Tibial artery (tissue), 4 donors: ENCODE measurements at regions of chr16 and their contacts with region 1.

Region 1: DNA sequence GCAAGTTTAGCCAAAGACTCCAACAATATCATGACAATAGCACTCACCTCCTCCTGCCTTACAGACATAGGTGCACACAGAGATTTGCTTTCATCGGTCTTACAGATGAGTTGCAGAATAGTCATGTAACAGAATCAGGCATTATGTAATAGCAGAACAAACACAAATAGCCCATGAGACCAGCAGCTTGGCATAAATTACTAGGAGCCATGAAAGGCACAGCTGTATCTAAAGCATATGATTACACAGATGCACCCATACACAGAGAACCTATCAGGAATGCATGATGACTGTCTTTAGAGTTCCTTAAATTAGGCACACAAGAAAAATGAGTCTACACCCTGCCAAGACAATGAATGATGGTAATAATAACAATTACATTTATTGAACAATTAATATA is 342.0 kb upstream of the XYLT1 start:
- DNase-seq: no peak
- H3K4me3 ChIP-seq: no peak overlapping the region
- H3K27ac ChIP-seq: no peak overlapping the region
- H3K4me1 ChIP-seq: no peaks in the 10 kb centered on the region
- H3K27me3 ChIP-seq: no peaks in the 10 kb centered on the region
- CTCF ChIP-seq: no peak

Region 2: GRCh38 chr16:16797239-16797638 is 1015.5 kb before region 1 on chr16:
- intact Hi-C with region 1: loop called (anchors 5 kb)
- DNase-seq: no peak
- H3K4me3 ChIP-seq: no peak overlapping the region
- H3K27ac ChIP-seq: no peak overlapping the region
- H3K4me1 ChIP-seq: no peaks in the 10 kb centered on the region
- H3K27me3 ChIP-seq: no peaks in the 10 kb centered on the region
- CTCF ChIP-seq: no peak

Region 3: DNA sequence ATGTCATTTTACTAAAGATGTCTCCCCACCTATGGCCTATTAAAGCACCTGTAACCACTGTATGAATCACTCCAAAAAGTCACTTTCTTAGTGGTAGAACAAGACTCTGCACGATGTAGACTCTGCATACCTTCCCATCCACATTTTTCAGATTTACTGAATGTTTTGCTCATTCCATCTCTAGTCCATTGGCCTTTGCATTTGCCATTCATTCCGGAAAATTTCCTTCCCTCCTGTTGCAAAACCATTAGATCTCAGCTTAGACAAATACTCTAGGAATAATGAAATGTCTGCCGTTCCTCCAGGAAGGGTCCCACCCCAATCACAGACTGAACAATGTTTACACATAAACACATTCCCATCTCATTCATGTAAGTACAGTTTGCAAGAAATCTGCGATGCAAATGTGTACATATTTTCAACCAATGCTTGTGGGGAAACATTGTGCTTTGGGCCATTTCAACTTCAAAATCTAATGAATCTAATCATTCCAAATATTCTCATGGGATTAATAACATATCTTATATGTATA is 195.7 kb before region 1 on chr16:
- intact Hi-C with region 1: no loop called
- DNase-seq: no peak
- H3K4me3 ChIP-seq: no peak overlapping the region
- H3K27ac ChIP-seq: no peak overlapping the region
- H3K4me1 ChIP-seq: no peaks in the 10 kb centered on the region
- H3K27me3 ChIP-seq: no peaks in the 10 kb centered on the region
- CTCF ChIP-seq: no peak

Region 4: GRCh38 chr16:17773698-17774101 is 39.1 kb before region 1 on chr16:
- intact Hi-C with region 1: no loop called
- DNase-seq: no peak
- H3K4me3 ChIP-seq: no peak overlapping the region
- H3K27ac ChIP-seq: no peak overlapping the region
- H3K4me1 ChIP-seq: no peaks in the 10 kb centered on the region
- H3K27me3 ChIP-seq: peaks cover 0 to 3% of the 10 kb centered on the region in 2 donors
- CTCF ChIP-seq: no peak